HCT116 (cell line): ENCODE measurements at regions of chrX and their contacts with region 1.

Region 1: DNA sequence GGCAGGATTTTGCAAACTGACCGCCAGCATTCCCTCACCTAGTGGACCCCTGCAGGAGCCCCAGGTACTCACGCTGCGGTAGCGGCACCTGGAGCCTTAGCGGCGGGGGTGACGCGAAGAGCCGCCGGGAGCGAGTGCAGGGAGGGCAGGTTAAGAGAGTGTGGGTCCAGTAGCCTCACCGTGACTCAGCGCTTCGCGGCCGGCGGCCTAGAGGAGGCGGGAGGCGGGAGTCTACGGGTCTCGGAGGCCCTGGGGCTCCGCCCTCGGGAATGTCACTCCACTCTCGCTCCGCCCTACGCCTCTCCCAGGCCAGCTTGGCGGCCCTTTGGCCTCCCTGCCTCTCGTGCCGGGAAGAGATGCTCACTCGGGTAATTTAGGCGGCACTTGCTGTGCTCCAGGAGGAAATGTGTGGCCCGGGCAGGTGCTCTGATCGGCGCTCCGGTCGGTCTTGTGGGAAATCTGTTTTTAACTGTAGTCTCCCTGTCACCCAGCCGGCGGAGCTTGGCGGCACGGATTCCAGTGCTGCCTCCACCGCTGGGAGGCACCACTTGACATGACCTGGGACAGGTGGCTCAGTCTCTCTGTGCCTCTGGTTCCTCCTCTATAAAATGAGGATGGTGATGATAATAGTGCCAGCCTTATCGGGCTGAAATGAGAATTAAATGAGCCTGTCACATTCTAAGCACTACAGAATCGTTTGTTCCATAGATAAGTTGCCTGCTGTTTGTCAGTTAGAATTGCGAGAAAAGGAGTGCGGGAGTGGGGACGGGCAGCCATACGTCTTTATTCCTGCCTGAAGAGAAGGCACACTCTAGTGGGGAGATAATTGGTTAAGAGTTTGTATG is at the start of gene PIR:
- DNase-seq: peak; percentile 68
- ATAC-seq: peak; percentile 97
- H3K4me3 ChIP-seq: peak within 1 kb of the TSS; percentile 56 to 71
- H3K27ac ChIP-seq: peak within 1 kb of the TSS; percentile 74
- H3K4me1 ChIP-seq: peaks cover 3 to 15% of the 10 kb centered on the region in 2 experiments; a peak in 1 of 4 replicates
- H3K27me3 ChIP-seq: no peaks in the 10 kb centered on the region
- CTCF ChIP-seq: peak; percentile 36 to 55 (median 53); a peak in 5 of 6 replicates
- POLR2A ChIP-seq: no peak
- RAD21 ChIP-seq: no peak
- total RNA-seq, gene PIR: 27.5 TPM

Region 2: DNA sequence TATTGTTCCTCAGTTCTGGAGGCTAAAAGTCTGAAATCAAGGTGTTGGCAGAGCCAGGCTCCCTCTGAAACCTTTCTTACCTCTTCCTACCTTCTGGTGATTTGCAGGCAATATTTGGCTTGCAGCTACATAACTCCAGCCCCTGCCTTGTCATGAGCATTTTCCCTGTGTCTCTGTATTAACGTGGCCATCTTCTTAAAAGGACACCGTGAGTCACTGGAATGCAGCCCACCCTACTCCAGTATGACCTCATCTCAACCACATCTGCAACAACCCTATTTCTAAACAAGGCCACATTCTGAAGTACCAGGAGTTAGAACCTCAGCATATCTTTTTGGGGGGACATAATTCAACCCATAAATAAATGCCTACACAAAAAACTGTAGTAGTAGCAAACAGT is 661.2 kb before region 1 on chrX:
- CTCF ChIA-PET with region 1: no interaction called
- POLR2A ChIA-PET with region 1: no interaction called
- RAD21 ChIA-PET with region 1: no interaction called
- intact Hi-C with region 1: no loop called
- DNase-seq: no peak
- ATAC-seq: no peak
- H3K4me3 ChIP-seq: no peak overlapping the region
- H3K27ac ChIP-seq: no peak overlapping the region
- H3K4me1 ChIP-seq: no peaks in the 10 kb centered on the region
- H3K27me3 ChIP-seq: no peaks in the 10 kb centered on the region
- CTCF ChIP-seq: no peak
- POLR2A ChIP-seq: no peak
- RAD21 ChIP-seq: no peak

Region 3: GRCh38 chrX:15545350-15545749 is 52.0 kb after region 1 on chrX:
- CTCF ChIA-PET with region 1: no interaction called
- POLR2A ChIA-PET with region 1: no interaction called
- RAD21 ChIA-PET with region 1: no interaction called
- intact Hi-C with region 1: no loop called
- DNase-seq: no peak
- ATAC-seq: no peak
- H3K4me3 ChIP-seq: no peak overlapping the region
- H3K27ac ChIP-seq: no peak overlapping the region
- H3K4me1 ChIP-seq: no peaks in the 10 kb centered on the region
- H3K27me3 ChIP-seq: no peaks in the 10 kb centered on the region
- CTCF ChIP-seq: no peak
- POLR2A ChIP-seq: no peak
- RAD21 ChIP-seq: no peak

Region 4: DNA sequence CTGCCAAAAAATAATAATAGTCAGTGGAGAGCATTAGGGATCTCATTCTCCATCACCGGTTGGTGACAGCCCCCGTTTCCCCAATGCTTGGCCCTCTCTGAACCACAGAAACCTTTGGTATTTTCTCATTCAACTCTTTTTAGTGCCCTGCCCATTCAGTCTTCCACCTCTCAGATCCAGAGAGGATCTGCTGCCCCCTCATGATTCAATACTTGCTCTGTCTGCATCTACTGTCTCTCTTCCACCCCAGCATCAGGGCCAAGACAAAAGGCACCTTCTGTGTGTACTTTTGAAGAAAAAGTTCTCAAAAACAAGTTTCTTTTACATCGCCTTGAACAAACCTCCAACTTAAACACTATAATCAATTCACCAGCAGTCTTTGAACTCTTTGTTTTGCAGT is 151.9 kb after region 1 on chrX:
- CTCF ChIA-PET with region 1: no interaction called
- POLR2A ChIA-PET with region 1: no interaction called
- RAD21 ChIA-PET with region 1: interaction called in 1 of 2 experiments, 5 read pairs
- intact Hi-C with region 1: loop called (anchors 10 kb)
- DNase-seq: no peak
- ATAC-seq: no peak
- H3K4me3 ChIP-seq: no peak overlapping the region
- H3K27ac ChIP-seq: no peak overlapping the region
- H3K4me1 ChIP-seq: no peaks in the 10 kb centered on the region
- H3K27me3 ChIP-seq: no peaks in the 10 kb centered on the region
- CTCF ChIP-seq: peak in 1 of 3 experiments; percentile 10; a peak in 1 of 6 replicates
- POLR2A ChIP-seq: no peak
- RAD21 ChIP-seq: peak; percentile 43; the same call in 1 of the 2 replicates

Region 5: DNA sequence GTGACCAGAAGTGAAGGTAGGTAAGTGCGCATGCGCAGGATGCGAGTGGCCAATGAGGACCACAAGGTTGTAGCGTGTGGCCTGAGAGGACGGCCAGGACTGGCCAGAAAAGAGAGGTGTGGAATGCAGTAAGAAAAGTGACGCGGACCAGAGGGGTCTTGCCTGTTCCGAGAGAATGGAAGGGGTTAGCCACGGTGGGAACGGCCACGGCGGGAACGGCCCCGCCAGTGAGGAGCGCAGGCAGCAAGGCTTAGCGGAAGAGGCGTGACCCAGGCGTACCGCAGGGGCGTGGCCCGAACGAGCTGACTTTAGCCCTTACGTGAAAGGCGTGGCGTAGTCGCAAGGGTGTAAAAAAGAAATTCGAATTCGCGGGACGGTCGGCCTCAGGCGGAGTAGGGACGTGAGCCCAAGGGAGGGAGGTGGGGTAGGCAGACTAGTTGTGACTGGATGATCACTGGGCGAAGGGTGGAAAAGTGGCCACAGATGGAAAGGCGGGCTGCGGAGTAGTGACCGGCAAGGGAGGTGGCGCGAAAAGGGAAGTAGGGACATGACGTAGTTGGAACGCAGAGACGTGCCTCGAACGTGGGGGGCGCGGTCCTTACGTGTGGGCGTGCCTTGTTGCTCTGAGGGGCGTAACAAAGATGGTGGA is 181.6 kb after region 1 on chrX:
- CTCF ChIA-PET with region 1: no interaction called
- POLR2A ChIA-PET with region 1: no interaction called
- RAD21 ChIA-PET with region 1: no interaction called
- intact Hi-C with region 1: loop called (anchors 5 kb)
- DNase-seq: peak; percentile 87
- ATAC-seq: peak; percentile 84
- H3K4me3 ChIP-seq: peak overlapping the region; percentile 77 to 81
- H3K27ac ChIP-seq: peak overlapping the region; percentile 99
- H3K4me1 ChIP-seq: peaks cover 6 to 14% of the 10 kb centered on the region in 2 experiments
- H3K27me3 ChIP-seq: no peaks in the 10 kb centered on the region
- CTCF ChIP-seq: no peak
- POLR2A ChIP-seq: no peak
- RAD21 ChIP-seq: no peak

Region 6: GRCh38 chrX:15724911-15725310 is 231.6 kb after region 1 on chrX:
- CTCF ChIA-PET with region 1: no interaction called
- POLR2A ChIA-PET with region 1: no interaction called
- RAD21 ChIA-PET with region 1: no interaction called
- intact Hi-C with region 1: no loop called
- DNase-seq: no peak
- ATAC-seq: 0 out of 2 replicates have a peak, but pooled peaks have one; percentile 44
- H3K4me3 ChIP-seq: no peak overlapping the region
- H3K27ac ChIP-seq: no peak overlapping the region
- H3K4me1 ChIP-seq: peaks cover 4 to 5% of the 10 kb centered on the region in 2 experiments; a peak in 3 of 4 replicates
- H3K27me3 ChIP-seq: no peaks in the 10 kb centered on the region
- CTCF ChIP-seq: no peak
- POLR2A ChIP-seq: no peak
- RAD21 ChIP-seq: 0 out of 2 replicates have a peak, but pooled peaks have one; percentile 7

Region 7: GRCh38 chrX:15956676-15957075 is 463.3 kb after region 1 on chrX:
- CTCF ChIA-PET with region 1: no interaction called
- POLR2A ChIA-PET with region 1: no interaction called
- RAD21 ChIA-PET with region 1: no interaction called
- intact Hi-C with region 1: no loop called
- DNase-seq: no peak
- ATAC-seq: no peak
- H3K4me3 ChIP-seq: no peak overlapping the region
- H3K27ac ChIP-seq: no peak overlapping the region
- H3K4me1 ChIP-seq: no peaks in the 10 kb centered on the region
- H3K27me3 ChIP-seq: no peaks in the 10 kb centered on the region
- CTCF ChIP-seq: no peak
- POLR2A ChIP-seq: no peak
- RAD21 ChIP-seq: no peak